ENCODE measurements at regions of chr6 and their contacts with region 1.

Region 1: DNA sequence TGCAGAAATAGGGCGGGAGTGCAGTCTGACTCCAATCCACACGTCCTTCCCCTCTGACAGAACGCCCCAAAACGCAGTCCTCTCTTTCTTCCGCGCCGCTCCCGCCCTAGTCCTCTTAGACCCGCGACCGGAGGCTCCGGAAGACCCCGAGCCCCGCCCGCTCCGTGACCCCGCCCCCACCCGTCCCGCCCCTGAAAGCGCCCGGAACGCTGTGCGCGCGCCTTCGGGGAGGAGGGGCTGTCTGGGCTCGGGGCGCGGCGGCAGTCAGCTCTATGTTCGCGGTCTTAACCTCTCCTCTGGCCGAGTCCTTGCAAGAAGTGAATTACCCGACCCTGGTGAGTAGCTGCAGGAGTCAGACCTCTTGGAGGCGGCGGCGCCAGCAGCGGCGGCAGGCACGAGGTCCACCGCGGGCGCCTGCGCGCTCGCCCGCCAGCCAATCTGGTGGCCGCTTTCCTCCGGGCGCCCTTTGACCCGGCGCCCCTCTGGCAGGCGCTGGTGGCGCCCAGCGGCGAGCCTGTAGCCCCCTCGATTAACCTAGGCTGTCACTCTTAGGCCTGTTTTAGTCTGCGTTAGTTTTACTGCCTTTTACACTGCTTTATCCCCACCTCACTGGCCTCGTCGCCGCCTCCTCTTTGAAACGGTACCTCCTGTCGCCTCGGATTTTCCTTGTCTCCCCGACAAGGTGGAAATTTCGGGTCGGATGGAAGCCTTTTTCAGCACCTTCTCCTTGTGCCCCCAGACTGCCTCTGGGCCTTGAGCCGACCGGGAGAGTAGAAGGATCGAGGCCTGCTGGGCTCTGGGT is at the start of gene MANEA:
- DNase-seq: peak; percentile 84
- H3K4me3 Mint-ChIP-seq: peak within 1 kb of the TSS; percentile 96
- H3K27ac Mint-ChIP-seq: peak within 1 kb of the TSS; percentile 99
- H3K4me1 Mint-ChIP-seq: peaks cover 51% of the 10 kb centered on the region
- H3K27me3 Mint-ChIP-seq: no peaks in the 10 kb centered on the region
- total RNA-seq, gene MANEA: 19.0 to 21.0 TPM

Region 2: DNA sequence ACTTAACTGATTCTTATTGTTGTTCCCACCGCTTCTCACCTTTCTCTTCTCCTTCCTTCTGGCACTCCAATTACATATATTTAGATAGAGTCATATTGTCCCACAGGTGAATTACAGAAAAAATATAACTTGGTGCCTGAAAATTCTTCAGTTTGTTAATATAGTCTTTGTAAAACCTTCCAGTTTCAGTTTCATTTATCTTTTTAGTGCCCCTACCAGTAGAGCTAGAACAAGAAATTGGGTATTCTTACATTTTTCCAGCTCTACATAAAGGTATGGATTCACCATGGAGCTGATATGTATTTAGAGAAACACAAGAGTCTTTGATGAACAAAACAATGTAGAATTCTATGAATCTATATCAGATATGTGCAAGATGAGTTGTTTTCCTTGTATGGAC is 10.5 kb after region 1 on chr6:
- CTCF ChIA-PET with region 1: interaction called, 6 read pairs
- POLR2A ChIA-PET with region 1: interaction called, 17 read pairs
- DNase-seq: no peak
- H3K4me3 Mint-ChIP-seq: peak overlapping the region; percentile 24
- H3K27ac Mint-ChIP-seq: no peak overlapping the region
- H3K4me1 Mint-ChIP-seq: peaks cover 11% of the 10 kb centered on the region
- H3K27me3 Mint-ChIP-seq: no peaks in the 10 kb centered on the region